ENCODE measurements at regions of chr1 and their contacts with region 1.

Region 1: DNA sequence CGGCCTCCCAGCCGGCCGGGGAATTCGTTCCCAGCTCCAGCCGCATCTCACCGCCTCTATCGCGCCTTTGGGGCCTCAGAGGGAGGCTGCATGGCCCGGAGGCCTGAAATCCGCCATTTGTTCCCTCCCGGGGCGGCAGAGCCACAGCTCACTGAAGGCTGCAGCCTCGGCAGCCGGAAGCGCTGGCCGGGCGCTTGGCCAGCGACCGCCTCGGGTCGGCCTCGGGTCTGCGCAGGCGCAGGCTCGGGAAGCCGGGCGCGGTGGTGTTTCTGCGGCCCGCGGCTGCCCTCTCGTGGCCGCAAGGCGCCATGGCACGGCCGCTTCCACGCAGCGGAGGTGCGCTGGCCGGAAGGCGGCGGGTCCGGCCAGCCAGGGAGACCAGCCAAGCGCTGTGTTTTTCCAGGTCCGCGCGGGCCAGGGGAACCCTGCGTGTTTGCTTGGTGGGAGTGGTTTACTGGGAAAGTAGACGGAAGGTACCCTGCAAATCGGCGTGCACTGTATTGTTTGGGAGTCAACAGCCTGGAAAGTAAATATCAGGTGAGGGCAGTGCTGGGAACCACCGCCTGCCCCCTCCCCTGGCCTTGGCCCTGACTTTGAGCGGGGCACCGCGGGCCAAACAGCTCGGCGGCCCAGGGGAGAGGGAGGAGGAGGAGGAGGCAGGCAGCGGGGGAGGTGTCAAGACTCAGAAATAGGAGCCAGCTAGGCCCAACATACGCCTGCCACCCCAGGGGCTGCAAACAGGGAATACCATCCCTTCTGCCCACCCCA is 52.7 kb upstream of the CD34 start:
- DNase-seq: peak; percentile 79 to 85
- ATAC-seq: peak; percentile 92 to 94
- H3K4me3 ChIP-seq: peak overlapping the region; percentile 69
- H3K27ac ChIP-seq: peak overlapping the region; percentile 91 to 96
- H3K4me1 ChIP-seq: peaks cover 8% of the 10 kb centered on the region; the same call in 2 of the 3 replicates
- CTCF ChIP-seq: peak; percentile 98
- EP300 ChIP-seq: no peak
- POLR2A ChIP-seq: peak; percentile 84
- RAD21 ChIP-seq: peak; percentile 87 to 99

Region 2: DNA sequence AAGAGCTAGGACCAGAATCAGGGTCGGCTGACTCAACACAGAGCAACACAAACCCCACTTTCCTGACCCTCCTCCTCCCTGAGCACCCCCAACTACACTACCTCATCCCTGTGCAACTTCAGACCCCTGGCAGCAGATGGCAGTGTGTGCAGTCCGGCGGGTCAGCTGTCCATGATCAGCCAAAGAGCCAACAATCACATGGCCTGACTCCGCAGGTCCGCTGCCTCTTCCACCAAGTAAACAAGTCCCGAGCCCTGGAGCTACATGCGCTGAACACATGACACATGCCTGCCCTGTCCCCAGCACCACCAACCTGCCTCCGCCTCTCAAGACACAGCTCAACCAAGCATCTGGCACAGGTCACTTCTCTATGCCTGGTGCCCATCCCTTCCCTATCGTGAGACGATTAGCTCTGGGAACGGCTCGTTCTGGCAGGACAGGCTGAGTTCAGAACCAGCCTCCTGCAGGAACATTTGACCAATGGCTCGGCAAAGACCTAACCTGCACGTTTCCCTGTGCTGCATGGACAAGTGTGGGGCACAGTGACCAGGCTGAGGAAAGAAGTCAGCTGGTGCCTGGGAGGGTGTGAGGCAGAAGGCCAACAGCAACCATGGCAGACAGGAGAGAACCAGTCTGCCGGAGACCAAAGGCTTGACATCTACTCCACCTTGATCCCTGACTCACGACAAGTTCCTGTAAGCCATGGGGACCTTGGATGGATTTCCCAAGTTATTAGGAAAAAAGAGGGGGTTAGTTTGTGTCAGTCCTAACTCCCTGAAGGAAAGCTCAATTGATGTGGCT is 151.5 kb before region 1 on chr1:
- CTCF ChIA-PET with region 1: interaction called, 17 read pairs
- POLR2A ChIA-PET with region 1: no interaction called
- DNase-seq: peak; percentile 60 to 73
- ATAC-seq: peak; percentile 72 to 90
- H3K4me3 ChIP-seq: no peak overlapping the region
- H3K27ac ChIP-seq: no peak overlapping the region
- H3K4me1 ChIP-seq: peaks cover 18% of the 10 kb centered on the region
- CTCF ChIP-seq: peak; percentile 38
- EP300 ChIP-seq: no peak
- POLR2A ChIP-seq: no peak
- RAD21 ChIP-seq: peak in 1 of 2 experiments; percentile 46; a peak in 3 of 5 replicates

Region 3: DNA sequence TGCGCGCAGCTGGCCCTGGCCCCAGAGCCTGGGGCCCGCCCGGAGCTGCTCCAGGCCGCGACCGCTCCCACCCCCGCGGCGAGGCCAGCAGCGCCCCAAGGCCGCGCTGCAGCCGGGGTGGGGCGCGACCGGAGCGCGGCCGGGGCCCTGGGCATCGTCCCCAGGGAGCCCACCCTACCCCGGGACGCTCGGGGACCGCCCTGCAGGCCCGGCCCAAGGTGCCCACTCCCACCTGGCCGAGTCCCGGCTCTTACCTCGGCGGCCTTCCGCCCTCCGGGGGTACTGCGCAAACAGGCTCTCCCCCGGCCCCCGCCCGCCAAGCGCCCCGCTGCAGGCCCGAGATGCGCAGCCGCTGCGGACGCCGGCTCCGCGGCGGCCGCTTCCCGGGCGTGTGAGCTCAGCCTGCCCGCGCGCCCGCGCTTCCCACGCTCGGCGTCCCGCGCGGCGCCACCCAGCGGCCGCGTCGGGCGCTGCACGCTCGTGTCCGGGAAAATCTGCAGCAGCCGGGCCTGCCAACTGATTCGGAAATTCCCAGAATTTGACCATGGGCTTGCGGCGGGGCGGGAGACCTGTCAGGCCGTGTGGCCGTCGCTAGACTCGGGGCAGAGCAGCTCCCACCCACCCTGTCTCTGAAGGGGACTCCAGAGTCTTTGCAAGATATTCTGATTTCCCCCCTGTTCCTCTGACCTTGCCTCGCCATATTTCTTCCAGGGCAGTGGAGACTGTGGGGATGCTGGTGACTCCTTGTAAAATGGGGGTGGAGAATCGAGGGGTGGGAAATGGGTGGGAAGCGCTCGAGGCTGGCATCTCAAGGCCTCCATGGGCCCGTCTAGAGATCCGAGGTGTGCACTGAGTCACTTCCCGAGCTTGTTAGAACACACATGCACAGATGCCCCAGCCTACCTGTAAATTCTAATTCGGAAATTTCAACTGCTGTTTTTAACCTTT is 94.6 kb before region 1 on chr1:
- CTCF ChIA-PET with region 1: interaction called, 34 read pairs
- POLR2A ChIA-PET with region 1: no interaction called
- DNase-seq: peak; percentile 66 to 69
- ATAC-seq: peak; percentile 81 to 89
- H3K4me3 ChIP-seq: peak overlapping the region; percentile 83
- H3K27ac ChIP-seq: peak overlapping the region; percentile 88 to 100
- H3K4me1 ChIP-seq: peaks cover 29% of the 10 kb centered on the region
- CTCF ChIP-seq: peak; percentile 91
- EP300 ChIP-seq: no peak
- POLR2A ChIP-seq: peak; percentile 15; the same call in 1 of the 2 replicates
- RAD21 ChIP-seq: peak; percentile 35 to 68

Region 4: GRCh38 chr1:207897188-207897587 is 66.4 kb before region 1 on chr1:
- CTCF ChIA-PET with region 1: interaction called, 108 read pairs
- POLR2A ChIA-PET with region 1: interaction called, 9 read pairs
- DNase-seq: no peak
- ATAC-seq: peak; percentile 40 to 45; a peak in 3 of 6 replicates
- H3K4me3 ChIP-seq: no peak overlapping the region
- H3K27ac ChIP-seq: no peak overlapping the region
- H3K4me1 ChIP-seq: no peaks in the 10 kb centered on the region
- CTCF ChIP-seq: peak; percentile 60
- EP300 ChIP-seq: no peak
- POLR2A ChIP-seq: no peak
- RAD21 ChIP-seq: peak; percentile 48 to 58

Region 5: DNA sequence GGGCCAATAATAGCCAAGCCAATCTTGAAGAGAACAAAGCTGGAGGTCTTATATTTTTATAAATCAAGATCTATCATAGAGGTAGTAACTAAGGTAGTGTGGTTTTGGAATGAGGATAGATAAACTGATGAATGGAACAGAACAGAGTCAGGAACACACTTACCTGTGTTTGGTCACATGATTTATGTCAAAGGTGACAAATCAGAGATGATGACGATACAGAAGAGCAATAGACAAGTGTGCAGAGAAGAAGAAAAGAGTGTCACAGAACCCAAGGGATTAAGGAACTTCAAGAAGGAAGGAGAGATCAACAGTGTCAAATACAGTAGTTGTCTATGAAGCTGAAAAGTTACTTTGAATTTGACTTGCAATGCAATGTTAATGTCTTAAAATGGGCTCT is 36.6 kb before region 1 on chr1:
- CTCF ChIA-PET with region 1: interaction called, 11 read pairs
- POLR2A ChIA-PET with region 1: no interaction called
- DNase-seq: no peak
- ATAC-seq: no peak
- H3K4me3 ChIP-seq: no peak overlapping the region
- H3K27ac ChIP-seq: no peak overlapping the region
- H3K4me1 ChIP-seq: no peaks in the 10 kb centered on the region
- CTCF ChIP-seq: no peak
- EP300 ChIP-seq: no peak
- POLR2A ChIP-seq: no peak
- RAD21 ChIP-seq: no peak

Region 6: GRCh38 chr1:207952617-207953542 is 10.7 kb before region 1 on chr1:
- CTCF ChIA-PET with region 1: interaction called, 44 read pairs
- POLR2A ChIA-PET with region 1: no interaction called
- DNase-seq: no peak
- ATAC-seq: no peak
- H3K4me3 ChIP-seq: no peak overlapping the region
- H3K27ac ChIP-seq: no peak overlapping the region
- H3K4me1 ChIP-seq: no peaks in the 10 kb centered on the region
- CTCF ChIP-seq: no peak
- EP300 ChIP-seq: no peak
- POLR2A ChIP-seq: no peak
- RAD21 ChIP-seq: no peak

Measured in A549 (cell line).